ENCODE measurements at regions of chr17 and their contacts with region 1.

Region 1: DNA sequence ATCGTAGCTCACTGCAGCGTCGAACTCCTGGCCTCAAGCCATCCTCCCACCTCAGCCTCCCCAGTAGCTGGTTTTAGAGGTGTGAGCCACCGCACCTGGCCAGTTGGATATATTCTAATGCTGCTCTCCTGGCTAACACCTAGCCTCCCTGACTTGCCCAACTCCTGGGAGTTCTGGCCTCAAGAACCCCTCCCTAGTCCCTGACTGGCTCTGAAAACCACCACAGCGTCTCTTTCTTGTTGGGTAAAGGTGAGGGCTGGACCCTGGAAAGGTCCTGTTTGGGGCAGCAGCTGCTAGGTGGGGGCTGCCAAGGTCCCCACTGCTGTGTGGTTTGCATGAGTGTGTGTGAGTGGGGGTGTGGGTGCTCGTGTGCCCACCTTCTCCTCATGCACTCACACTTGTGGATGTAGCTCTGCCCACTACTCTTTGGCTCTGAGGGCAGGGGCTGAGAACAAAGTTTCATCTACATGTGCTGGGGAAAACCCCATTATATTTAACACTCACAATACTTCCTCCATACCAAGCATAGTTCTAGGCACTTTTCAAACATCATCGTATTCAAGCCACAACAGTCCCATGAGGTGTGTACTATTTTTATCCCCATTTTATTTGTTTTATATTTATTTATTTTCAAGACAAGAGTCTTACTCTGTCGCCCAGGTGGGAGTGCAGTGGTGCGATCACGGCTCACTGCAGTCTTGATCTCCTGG is 7.1 kb upstream of the SPNS3 start:
- DNase-seq: no peak

Region 2: GRCh38 chr17:4540224-4540641 is 113.6 kb after region 1 on chr17:
- intact Hi-C with region 1: loop called (anchors 5 to 10 kb)
- DNase-seq: no peak